ENCODE measurements at regions of chr12 and their contacts with region 1.

Region 1: GRCh38 chr12:102119674-102120563 is at the starts of genes NUP37 and PARPBP:
- DNase-seq: peak; percentile 87 to 96 (median 92)
- H3K4me3 ChIP-seq: peak within 1 kb of the TSS; percentile 52 to 97 (median 87)
- H3K27ac ChIP-seq: peak within 1 kb of the TSS in 51 of 59 donors; percentile 27 to 93 (median 79)
- H3K27me3 ChIP-seq: no peaks in the 10 kb centered on the region
- CTCF ChIP-seq: peak in 44 of 56 donors; percentile 9 to 60 (median 32)
- total RNA-seq, gene NUP37: 3.9 to 14.1 (median 7.9) TPM
- total RNA-seq, gene PARPBP: 0.42 to 4.3 (median 2.1) TPM

Region 2: GRCh38 chr12:101356794-101357193 is 763.1 kb before region 1 on chr12:
- intact Hi-C with region 1: no loop called
- DNase-seq: no peak
- H3K4me3 ChIP-seq: no peak overlapping the region
- H3K27ac ChIP-seq: no peak overlapping the region
- H3K27me3 ChIP-seq: no peaks in the 10 kb centered on the region
- CTCF ChIP-seq: no peak

Region 3: DNA sequence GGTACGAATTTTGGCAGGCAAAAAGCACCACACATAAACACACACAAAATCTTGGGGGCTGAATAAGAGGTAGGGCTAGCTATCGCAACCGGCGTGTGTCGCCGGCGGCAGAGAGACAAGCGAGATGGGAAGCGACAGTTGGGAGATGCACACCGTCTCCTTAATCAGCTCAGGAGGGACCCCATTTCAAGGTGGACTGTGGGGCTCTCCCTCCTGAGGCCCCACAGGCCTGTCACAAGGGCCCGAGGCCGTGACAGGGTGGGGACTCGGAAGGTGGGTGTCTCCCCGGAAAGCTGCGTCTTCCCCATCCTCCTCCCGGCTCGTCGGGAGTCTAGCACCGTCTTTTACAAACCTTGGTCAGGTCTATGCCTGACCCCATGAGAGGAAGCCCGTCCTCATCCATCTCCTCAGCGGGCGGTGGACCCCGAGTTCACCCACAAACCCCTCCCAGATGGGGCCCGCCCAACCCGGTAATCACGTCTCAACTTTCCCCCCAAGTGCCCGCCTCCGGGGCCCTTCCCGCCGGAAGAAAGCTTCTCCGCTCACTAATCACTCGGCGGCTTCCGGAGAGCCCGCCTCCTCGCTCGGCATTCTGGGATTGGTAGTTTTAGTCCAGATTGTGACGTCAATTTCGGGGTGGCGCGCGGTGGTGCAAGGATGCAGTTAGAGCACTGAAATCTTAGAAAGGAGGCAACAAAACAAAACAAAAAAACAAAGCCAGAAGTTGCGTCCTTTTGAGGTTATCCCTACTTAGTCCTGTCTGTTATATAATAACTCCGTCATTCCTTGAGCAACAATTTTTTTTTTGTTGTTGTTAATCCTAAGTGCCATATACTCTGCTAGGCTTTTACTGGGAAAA is 58.1 kb before region 1 on chr12 and contains the start of gene WASHC3:
- intact Hi-C with region 1: loop called (anchors 2 to 10 kb)
- DNase-seq: peak; percentile 96 to 98 (median 97)
- H3K4me3 ChIP-seq: peak within 1 kb of the TSS; percentile 67 to 99 (median 90)
- H3K27ac ChIP-seq: peak within 1 kb of the TSS; percentile 45 to 96 (median 87)
- H3K27me3 ChIP-seq: no peaks in the 10 kb centered on the region
- CTCF ChIP-seq: peak in 38 of 56 donors; percentile 8 to 54 (median 28)
- total RNA-seq, gene WASHC3: 28.3 to 74.3 (median 46.9) TPM

Region 4: GRCh38 chr12:102776041-102776440 is 656.1 kb after region 1 on chr12:
- intact Hi-C with region 1: no loop called
- DNase-seq: no peak
- H3K4me3 ChIP-seq: no peak overlapping the region
- H3K27ac ChIP-seq: no peak overlapping the region
- H3K27me3 ChIP-seq: peaks cover 0 to 18% (median 0%) of the 10 kb centered on the region in 45 donors
- CTCF ChIP-seq: no peak

Measured in dorsolateral prefrontal cortex (tissue), 120 donors.